Esophagus muscularis mucosa (tissue), 4 donors: ENCODE measurements at regions of chr10 and their contacts with region 1.

Region 1: DNA sequence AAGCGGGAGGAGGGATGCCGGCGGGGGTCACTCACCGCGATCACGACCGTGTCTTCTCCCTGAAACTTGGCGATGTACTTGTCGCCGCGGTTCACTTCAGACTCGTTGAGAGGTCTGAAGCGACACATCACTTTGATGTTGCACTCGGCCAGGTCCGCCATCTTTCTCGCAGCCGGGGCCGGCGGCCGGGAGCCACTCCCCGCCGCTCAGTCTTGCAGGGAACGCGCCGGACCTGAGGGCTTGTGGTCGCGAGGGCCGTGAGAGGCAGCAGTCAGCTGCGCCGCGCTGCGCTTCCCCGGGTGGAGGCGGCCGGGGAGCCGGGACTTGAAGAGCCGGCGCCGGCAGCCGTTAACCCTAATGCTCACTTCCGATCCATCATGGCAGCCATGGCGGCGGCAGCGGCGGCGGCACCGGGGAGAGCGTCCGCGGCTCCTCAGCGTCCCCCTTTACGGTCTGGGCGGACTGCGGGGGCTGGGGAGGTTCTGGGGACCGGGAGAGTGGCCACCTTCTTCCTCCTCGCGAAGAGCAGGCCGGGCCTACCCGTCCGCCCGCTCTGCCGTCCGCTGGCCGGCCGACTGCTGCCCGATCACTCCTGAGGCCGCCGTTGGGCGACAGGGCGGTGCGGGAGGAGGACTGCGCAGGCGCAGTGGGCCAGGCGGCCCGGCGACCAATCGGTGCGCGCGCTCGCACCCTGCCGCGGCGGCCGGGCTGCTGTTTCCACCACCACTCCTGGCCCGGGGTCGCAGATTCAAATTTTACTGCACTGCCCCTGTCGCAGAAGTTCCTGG is at the start of gene KIF5B:
- DNase-seq: peak; percentile 92
- H3K4me3 ChIP-seq: peak within 1 kb of the TSS; percentile 72 to 99 (median 92)
- H3K27ac ChIP-seq: peak within 1 kb of the TSS; percentile 96 to 100 (median 99)
- H3K4me1 ChIP-seq: peaks cover 28 to 35% (median 29%) of the 10 kb centered on the region in 4 donors
- H3K27me3 ChIP-seq: no peaks in the 10 kb centered on the region
- CTCF ChIP-seq: no peak
- EP300 ChIP-seq: no peak
- POLR2A ChIP-seq: peak; percentile 98
- total RNA-seq, gene KIF5B: 253 to 317 (median 298) TPM

Region 2: DNA sequence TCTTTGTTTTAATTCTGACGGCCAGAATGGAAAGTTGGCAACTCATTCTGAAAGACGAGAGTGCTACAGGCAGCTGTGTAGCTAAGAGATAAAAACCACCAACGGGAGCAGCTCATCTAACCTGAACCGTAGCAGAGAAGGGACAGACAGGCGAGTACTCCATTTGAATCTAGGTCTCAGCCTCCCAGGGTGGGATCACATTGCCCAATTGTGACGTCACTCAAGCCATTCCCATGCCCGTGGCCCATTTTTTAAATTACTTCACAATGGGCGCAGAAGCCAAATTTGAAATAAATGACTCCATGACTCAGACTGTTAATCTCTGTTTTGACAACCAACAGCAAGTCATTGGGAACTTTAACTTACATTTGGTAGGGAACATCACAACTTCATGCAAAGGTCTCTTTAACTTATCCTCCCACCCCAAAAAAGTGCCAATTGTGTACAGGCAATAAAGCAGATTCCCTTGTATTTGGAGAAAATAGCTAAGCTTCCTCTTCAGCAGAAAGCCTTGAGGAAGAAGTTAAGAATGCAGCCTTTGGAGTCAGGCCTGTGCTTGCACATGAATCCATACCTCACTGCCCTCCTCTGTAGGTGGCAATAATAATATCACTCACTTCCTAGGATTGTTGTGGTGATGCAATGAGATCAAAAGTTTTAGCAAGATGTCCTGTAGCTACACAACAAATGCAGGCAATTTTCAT is 93.4 kb after region 1 on chr10:
- intact Hi-C with region 1: loop called (anchors 5 kb)
- DNase-seq: peak; percentile 93
- H3K4me3 ChIP-seq: peak overlapping the region; percentile 17 to 28 (median 21)
- H3K27ac ChIP-seq: peak overlapping the region; percentile 77 to 82 (median 81)
- H3K4me1 ChIP-seq: peaks cover 8 to 20% (median 14%) of the 10 kb centered on the region in 4 donors
- H3K27me3 ChIP-seq: no peaks in the 10 kb centered on the region
- CTCF ChIP-seq: no peak
- EP300 ChIP-seq: no peak
- POLR2A ChIP-seq: no peak